PC-9 (cell line): ENCODE measurements at regions of chr9 and their contacts with region 1.

Region 1: DNA sequence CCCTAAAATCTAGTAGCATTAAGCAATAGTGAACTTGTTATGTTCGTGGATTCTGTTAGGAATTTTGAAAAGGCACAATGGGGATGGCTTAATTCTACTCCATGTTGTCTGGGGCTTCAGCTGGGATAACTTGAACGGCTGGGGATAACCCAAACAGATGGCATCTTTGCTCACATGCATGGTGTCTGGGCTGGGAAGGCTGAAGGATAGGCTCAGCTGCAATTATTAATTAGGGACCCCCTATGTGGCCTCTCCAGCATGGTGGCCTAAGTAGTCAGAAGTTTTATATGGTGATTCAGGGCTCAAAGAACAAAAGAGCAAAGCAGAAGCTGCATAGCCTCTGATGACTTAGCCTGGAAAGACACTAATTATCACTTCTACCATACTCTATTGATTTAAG is 551.1 kb downstream of the PSAT1 start:
- DNase-seq: no peak
- H3K4me3 ChIP-seq: no peak overlapping the region
- H3K27ac ChIP-seq: no peak overlapping the region
- H3K4me1 ChIP-seq: no peaks in the 10 kb centered on the region
- H3K27me3 ChIP-seq: no peaks in the 10 kb centered on the region
- CTCF ChIP-seq: no peak

Region 2: GRCh38 chr9:78756813-78757510 is 91.1 kb before region 1 on chr9:
- CTCF ChIA-PET with region 1: no interaction called
- POLR2A ChIA-PET with region 1: no interaction called
- intact Hi-C with region 1: no loop called
- DNase-seq: no peak
- H3K4me3 ChIP-seq: no peak overlapping the region
- H3K27ac ChIP-seq: no peak overlapping the region
- H3K4me1 ChIP-seq: no peaks in the 10 kb centered on the region
- H3K27me3 ChIP-seq: no peaks in the 10 kb centered on the region
- CTCF ChIP-seq: no peak

Region 3: DNA sequence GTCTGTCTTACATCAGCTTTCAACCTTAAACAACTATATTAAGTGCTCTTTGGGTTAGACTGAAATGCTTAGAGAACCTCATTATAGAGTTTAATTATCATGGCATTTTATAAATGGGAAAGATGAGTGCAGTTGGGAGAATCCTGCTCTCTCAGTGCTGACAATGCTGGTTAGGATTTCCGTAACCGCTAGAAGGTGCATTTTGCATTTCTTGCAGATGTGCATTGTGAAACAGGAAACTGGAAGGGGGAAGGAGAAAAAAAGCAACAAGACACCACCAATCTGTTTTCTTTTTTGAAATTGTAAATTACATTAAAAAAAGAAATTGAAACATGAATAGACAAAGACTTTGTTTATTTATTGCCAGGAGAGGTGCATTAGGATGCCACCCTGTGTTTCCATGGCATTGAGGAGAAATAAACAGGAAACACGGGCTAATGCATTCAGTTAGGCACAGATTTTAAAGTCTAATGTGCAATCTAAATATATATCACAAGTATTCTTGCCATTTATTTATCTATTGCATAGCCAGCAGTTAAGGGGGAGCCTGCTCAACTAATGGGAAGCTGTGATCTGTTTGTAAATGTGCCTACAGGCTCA is 72.3 kb before region 1 on chr9:
- CTCF ChIA-PET with region 1: no interaction called
- POLR2A ChIA-PET with region 1: no interaction called
- intact Hi-C with region 1: no loop called
- DNase-seq: no peak
- H3K4me3 ChIP-seq: no peak overlapping the region
- H3K27ac ChIP-seq: no peak overlapping the region
- H3K4me1 ChIP-seq: no peaks in the 10 kb centered on the region
- H3K27me3 ChIP-seq: peaks cover 17% of the 10 kb centered on the region
- CTCF ChIP-seq: no peak

Region 4: GRCh38 chr9:78874061-78874460 is 26.0 kb after region 1 on chr9:
- CTCF ChIA-PET with region 1: no interaction called
- POLR2A ChIA-PET with region 1: no interaction called
- intact Hi-C with region 1: no loop called
- DNase-seq: no peak
- H3K4me3 ChIP-seq: no peak overlapping the region
- H3K27ac ChIP-seq: no peak overlapping the region
- H3K4me1 ChIP-seq: no peaks in the 10 kb centered on the region
- H3K27me3 ChIP-seq: no peaks in the 10 kb centered on the region
- CTCF ChIP-seq: no peak

Region 5: GRCh38 chr9:78909566-78909965 is 61.5 kb after region 1 on chr9:
- CTCF ChIA-PET with region 1: no interaction called
- POLR2A ChIA-PET with region 1: no interaction called
- intact Hi-C with region 1: loop called (anchors 10 kb)
- DNase-seq: no peak
- H3K4me3 ChIP-seq: no peak overlapping the region
- H3K27ac ChIP-seq: no peak overlapping the region
- H3K4me1 ChIP-seq: no peaks in the 10 kb centered on the region
- H3K27me3 ChIP-seq: no peaks in the 10 kb centered on the region
- CTCF ChIP-seq: no peak

Region 6: GRCh38 chr9:79189511-79189924 is 341.5 kb after region 1 on chr9:
- CTCF ChIA-PET with region 1: no interaction called
- POLR2A ChIA-PET with region 1: no interaction called
- intact Hi-C with region 1: no loop called
- DNase-seq: no peak
- H3K4me3 ChIP-seq: no peak overlapping the region
- H3K27ac ChIP-seq: no peak overlapping the region
- H3K4me1 ChIP-seq: no peaks in the 10 kb centered on the region
- H3K27me3 ChIP-seq: no peaks in the 10 kb centered on the region; the same call in 1 of the 2 replicates
- CTCF ChIP-seq: no peak